CD8-positive, alpha-beta T cell (primary cell): ENCODE measurements at regions of chr16 and their contacts with region 1.

Region 1: GRCh38 chr16:48385272-48386150 is at the start of gene SIAH1:
- DNase-seq: peak; percentile 77 to 94 (median 89)
- ATAC-seq: peak; percentile 84
- H3K4me3 ChIP-seq: peak within 1 kb of the TSS; percentile 63 to 74
- H3K4me3 Mint-ChIP-seq: peak within 1 kb of the TSS; percentile 86
- H3K27ac ChIP-seq: peak within 1 kb of the TSS; percentile 54 to 68
- H3K27ac Mint-ChIP-seq: peak within 1 kb of the TSS; percentile 82
- H3K4me1 ChIP-seq: peaks cover 13% of the 10 kb centered on the region
- H3K4me1 Mint-ChIP-seq: peaks cover 25% of the 10 kb centered on the region
- H3K27me3 ChIP-seq: no peaks in the 10 kb centered on the region
- H3K27me3 Mint-ChIP-seq: no peaks in the 10 kb centered on the region
- CTCF ChIP-seq: no peak
- total RNA-seq, gene SIAH1: 28.1 to 34.8 TPM

Region 2: GRCh38 chr16:46673320-46674013 is 1712.0 kb before region 1 on chr16:
- CTCF ChIA-PET with region 1: no interaction called
- POLR2A ChIA-PET with region 1: no interaction called
- intact Hi-C with region 1: loop called in 1 of 2 experiments (anchors 10 kb)
- DNase-seq: peak in 8 of 9 experiments; percentile 17 to 76 (median 48)
- ATAC-seq: peak; percentile 95
- H3K4me3 ChIP-seq: no peak overlapping the region
- H3K4me3 Mint-ChIP-seq: no peak overlapping the region
- H3K27ac ChIP-seq: no peak overlapping the region
- H3K27ac Mint-ChIP-seq: no peak overlapping the region
- H3K4me1 ChIP-seq: no peaks in the 10 kb centered on the region
- H3K4me1 Mint-ChIP-seq: peaks cover 2% of the 10 kb centered on the region
- H3K27me3 ChIP-seq: no peaks in the 10 kb centered on the region
- H3K27me3 Mint-ChIP-seq: no peaks in the 10 kb centered on the region
- CTCF ChIP-seq: peak; percentile 95

Region 3: DNA sequence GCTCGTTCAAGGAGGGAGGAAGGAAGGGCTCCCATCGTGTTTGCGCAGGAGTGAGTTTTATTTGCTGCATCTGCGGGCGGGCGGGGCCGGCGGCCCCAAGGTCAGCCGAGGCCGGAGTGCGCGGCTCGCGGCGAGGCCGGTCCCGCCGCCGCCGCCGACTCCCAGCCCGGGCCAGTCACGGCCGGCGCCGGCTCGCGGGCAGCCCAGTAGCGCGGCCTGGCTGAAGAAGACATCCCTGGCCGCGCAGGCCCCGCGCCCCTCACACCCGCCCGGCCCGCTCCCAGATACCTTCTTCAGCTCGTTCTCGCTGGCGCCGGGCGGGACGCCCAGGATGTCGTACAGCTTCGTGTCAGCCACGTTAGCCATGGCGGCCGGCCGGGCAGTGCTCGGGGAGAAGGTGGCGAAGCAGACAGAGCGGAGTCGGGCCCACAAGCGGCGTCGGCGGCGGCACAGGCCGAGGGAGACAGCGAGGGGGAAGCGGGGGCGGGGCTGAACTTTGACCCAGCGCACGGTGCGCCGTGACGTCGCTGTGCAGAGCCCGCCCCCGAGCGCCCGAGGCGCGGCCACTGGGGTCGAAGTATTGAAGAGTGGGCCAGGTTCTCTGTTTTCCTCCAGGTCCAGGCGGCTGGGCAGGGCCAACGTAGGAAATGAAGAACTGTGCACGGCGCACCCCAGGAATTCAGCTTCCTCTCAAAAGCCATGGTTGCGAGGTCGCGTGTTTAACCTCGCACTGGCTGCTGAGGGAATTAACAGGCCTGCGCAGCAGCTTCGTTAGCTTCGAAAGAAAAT is 1412.1 kb before region 1 on chr16 and contains the start of gene DNAJA2:
- CTCF ChIA-PET with region 1: no interaction called
- POLR2A ChIA-PET with region 1: no interaction called
- intact Hi-C with region 1: loop called (anchors 5 kb)
- DNase-seq: peak; percentile 84 to 96 (median 93)
- ATAC-seq: peak; percentile 93
- H3K4me3 ChIP-seq: peak within 1 kb of the TSS; percentile 87 to 89
- H3K4me3 Mint-ChIP-seq: peak within 1 kb of the TSS; percentile 92
- H3K27ac ChIP-seq: peak within 1 kb of the TSS; percentile 96 to 98
- H3K27ac Mint-ChIP-seq: peak within 1 kb of the TSS; percentile 100
- H3K4me1 ChIP-seq: peaks cover 45% of the 10 kb centered on the region
- H3K4me1 Mint-ChIP-seq: peaks cover 53% of the 10 kb centered on the region
- H3K27me3 ChIP-seq: no peaks in the 10 kb centered on the region
- H3K27me3 Mint-ChIP-seq: no peaks in the 10 kb centered on the region
- CTCF ChIP-seq: no peak
- total RNA-seq, gene DNAJA2: 82.8 to 83.1 TPM

Region 4: DNA sequence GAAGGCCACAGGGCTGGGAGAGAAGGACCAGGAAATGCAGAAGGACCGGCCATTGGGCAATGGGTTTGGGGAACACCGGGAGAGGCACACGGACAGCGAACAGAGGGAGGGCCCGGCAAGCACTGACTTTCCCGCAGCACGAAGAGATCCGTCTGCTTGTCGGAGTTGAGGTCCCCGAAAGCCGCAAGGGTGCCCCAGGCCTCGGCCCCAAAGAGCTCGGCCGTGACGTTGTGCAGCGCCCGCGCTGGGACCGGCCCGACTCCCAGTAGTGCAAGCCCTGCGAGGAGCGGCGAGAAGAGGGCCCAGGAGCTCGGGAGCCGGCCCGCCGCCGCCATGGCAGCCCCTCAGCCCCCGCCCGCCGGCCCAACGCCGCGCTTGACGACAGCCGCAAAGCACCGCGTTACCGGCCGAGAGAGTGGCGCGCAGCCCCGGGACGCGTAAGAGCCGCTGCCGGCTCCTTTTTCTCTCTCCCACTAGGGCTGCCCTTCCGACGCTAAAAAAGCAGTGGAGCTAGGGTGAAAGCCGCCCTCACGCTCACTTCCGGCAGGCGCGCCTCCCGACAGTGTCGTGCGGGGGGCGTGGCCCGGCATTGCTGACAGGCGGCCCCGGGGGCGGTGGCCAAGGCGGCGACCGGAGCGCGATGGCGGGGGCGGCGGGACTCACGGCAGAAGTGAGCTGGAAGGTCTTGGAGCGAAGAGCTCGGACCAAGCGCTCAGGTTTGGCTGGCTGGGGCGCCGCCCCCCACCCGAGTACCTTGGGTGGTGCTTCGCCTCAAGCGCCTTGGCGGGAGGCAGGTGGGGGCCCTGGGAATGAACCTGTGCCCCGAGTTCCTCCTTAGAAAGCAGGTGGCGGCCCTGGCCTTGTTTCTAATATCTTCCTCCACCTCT is 924.6 kb before region 1 on chr16 and contains the starts of genes ITFG1 and PHKB:
- CTCF ChIA-PET with region 1: no interaction called
- POLR2A ChIA-PET with region 1: no interaction called
- intact Hi-C with region 1: loop called in 1 of 2 experiments (anchors 10 kb)
- DNase-seq: peak; percentile 91 to 97 (median 95)
- ATAC-seq: peak; percentile 95
- H3K4me3 ChIP-seq: peak within 1 kb of the TSS; percentile 77 to 87
- H3K4me3 Mint-ChIP-seq: peak within 1 kb of the TSS; percentile 99
- H3K27ac ChIP-seq: peak within 1 kb of the TSS; percentile 77 to 95
- H3K27ac Mint-ChIP-seq: peak within 1 kb of the TSS; percentile 95
- H3K4me1 ChIP-seq: peaks cover 33% of the 10 kb centered on the region
- H3K4me1 Mint-ChIP-seq: peaks cover 72% of the 10 kb centered on the region
- H3K27me3 ChIP-seq: no peaks in the 10 kb centered on the region
- H3K27me3 Mint-ChIP-seq: no peaks in the 10 kb centered on the region
- CTCF ChIP-seq: no peak
- total RNA-seq, gene ITFG1: 13.2 to 16.8 TPM
- total RNA-seq, gene PHKB: 32.4 to 32.8 TPM

Region 5: DNA sequence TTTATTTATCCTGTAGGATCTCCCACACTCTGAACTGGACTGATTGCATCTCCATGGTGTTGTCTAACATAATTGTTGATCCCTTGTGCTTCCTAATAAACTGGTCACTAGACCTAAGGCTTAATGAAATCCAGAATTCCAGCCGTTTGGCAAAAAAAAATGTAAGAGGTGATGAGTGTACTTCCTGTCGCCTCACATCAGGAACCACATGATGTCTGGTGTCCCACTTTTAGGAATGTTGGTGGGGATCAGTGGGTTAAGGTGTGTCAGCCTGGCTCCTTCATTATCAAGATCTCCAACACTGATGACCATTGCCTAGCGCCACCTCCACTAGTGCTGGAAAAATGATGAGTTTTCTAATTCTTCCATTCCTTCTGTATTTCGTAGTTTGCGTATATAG is 160.1 kb before region 1 on chr16:
- CTCF ChIA-PET with region 1: no interaction called
- POLR2A ChIA-PET with region 1: no interaction called
- intact Hi-C with region 1: no loop called
- DNase-seq: no peak
- ATAC-seq: no peak
- H3K4me3 ChIP-seq: no peak overlapping the region
- H3K4me3 Mint-ChIP-seq: no peak overlapping the region
- H3K27ac ChIP-seq: no peak overlapping the region
- H3K27ac Mint-ChIP-seq: no peak overlapping the region
- H3K4me1 ChIP-seq: no peaks in the 10 kb centered on the region
- H3K4me1 Mint-ChIP-seq: no peaks in the 10 kb centered on the region
- H3K27me3 ChIP-seq: no peaks in the 10 kb centered on the region
- H3K27me3 Mint-ChIP-seq: peaks cover 16% of the 10 kb centered on the region
- CTCF ChIP-seq: no peak

Region 6: DNA sequence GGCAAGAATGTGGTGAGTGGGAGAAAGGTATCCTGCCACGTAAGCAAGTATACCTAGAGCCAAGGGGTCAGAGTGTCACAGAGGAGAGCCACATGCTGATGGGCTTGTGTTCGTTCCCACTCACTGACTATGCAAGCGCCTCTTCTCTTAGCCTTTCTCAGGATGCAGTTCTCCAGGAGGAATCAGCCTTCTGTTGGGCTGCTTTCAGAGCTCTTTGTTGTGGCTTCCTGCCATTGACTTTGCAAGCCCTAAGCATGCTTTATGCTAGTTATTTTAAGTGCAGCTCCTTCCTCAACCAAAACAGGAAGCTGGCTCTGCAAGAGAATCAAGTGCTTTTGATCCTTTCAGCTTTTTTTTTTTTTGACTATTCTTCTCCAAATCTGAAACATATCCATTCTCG is 66.9 kb before region 1 on chr16:
- CTCF ChIA-PET with region 1: no interaction called
- POLR2A ChIA-PET with region 1: interaction called, 7 read pairs
- intact Hi-C with region 1: loop called in 1 of 2 experiments (anchors 10 kb)
- DNase-seq: peak in 8 of 9 experiments; percentile 7 to 73 (median 36)
- ATAC-seq: peak; percentile 87
- H3K4me3 ChIP-seq: no peak overlapping the region
- H3K4me3 Mint-ChIP-seq: peak overlapping the region; percentile 62
- H3K27ac ChIP-seq: peak overlapping the region in 1 of 2 experiments; percentile 51
- H3K27ac Mint-ChIP-seq: peak overlapping the region; percentile 79
- H3K4me1 ChIP-seq: peaks cover 32% of the 10 kb centered on the region
- H3K4me1 Mint-ChIP-seq: peaks cover 54% of the 10 kb centered on the region
- H3K27me3 ChIP-seq: no peaks in the 10 kb centered on the region
- H3K27me3 Mint-ChIP-seq: no peaks in the 10 kb centered on the region
- CTCF ChIP-seq: no peak

Region 7: GRCh38 chr16:48365581-48366164 is 19.8 kb before region 1 on chr16:
- CTCF ChIA-PET with region 1: no interaction called
- POLR2A ChIA-PET with region 1: interaction called, 10 read pairs
- intact Hi-C with region 1: loop called (anchors 1 kb)
- DNase-seq: peak; percentile 48 to 83 (median 69)
- ATAC-seq: peak; percentile 85
- H3K4me3 ChIP-seq: peak overlapping the region; percentile 65 to 83
- H3K4me3 Mint-ChIP-seq: peak overlapping the region; percentile 89
- H3K27ac ChIP-seq: peak overlapping the region; percentile 63 to 89
- H3K27ac Mint-ChIP-seq: peak overlapping the region; percentile 97
- H3K4me1 ChIP-seq: peaks cover 25% of the 10 kb centered on the region
- H3K4me1 Mint-ChIP-seq: peaks cover 40% of the 10 kb centered on the region
- H3K27me3 ChIP-seq: no peaks in the 10 kb centered on the region
- H3K27me3 Mint-ChIP-seq: no peaks in the 10 kb centered on the region
- CTCF ChIP-seq: no peak

Region 8: DNA sequence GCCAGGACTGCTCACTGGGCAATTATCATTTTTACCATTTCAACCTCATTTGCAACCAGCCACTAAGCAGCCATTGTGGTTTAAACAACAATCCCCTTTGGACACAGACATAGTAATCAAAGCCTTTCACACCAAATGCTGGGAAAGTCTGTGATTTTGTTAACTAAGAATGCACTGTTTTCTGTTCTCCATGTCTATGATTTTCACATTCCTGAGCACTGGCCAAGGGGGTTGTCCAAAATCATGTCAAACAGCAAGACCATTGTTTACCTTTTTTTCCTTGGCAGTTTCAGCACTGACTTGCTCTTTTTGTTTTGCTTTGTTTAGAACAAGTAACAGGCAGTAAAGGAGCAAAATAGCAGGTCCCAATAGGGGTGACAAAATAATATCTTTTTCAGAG is 106.0 kb after region 1 on chr16:
- CTCF ChIA-PET with region 1: no interaction called
- POLR2A ChIA-PET with region 1: no interaction called
- intact Hi-C with region 1: no loop called
- DNase-seq: no peak
- ATAC-seq: no peak
- H3K4me3 ChIP-seq: no peak overlapping the region
- H3K4me3 Mint-ChIP-seq: no peak overlapping the region
- H3K27ac ChIP-seq: no peak overlapping the region
- H3K27ac Mint-ChIP-seq: no peak overlapping the region
- H3K4me1 ChIP-seq: no peaks in the 10 kb centered on the region
- H3K4me1 Mint-ChIP-seq: no peaks in the 10 kb centered on the region
- H3K27me3 ChIP-seq: no peaks in the 10 kb centered on the region
- H3K27me3 Mint-ChIP-seq: peaks cover 11% of the 10 kb centered on the region
- CTCF ChIP-seq: no peak

Region 9: DNA sequence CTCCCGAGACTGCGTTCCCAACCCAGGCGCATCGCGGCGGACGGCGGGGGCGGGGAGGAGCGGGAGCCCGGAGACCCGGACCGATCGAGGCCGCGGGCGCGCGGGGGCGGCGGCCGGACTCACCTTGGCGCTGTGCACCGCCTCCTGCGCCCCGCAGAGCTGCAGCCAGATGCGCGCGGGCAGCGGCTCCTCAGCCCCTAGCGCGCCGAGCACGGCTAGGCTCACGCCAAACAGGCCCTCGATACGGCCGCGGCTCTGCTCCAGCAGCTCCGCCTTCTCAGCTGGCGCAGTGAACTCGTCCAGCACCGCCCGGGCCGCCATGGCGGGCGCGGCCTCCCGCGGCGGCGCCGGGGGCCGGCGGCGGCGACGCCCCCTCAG is 224.1 kb after region 1 on chr16:
- CTCF ChIA-PET with region 1: no interaction called
- POLR2A ChIA-PET with region 1: interaction called, 10 read pairs
- intact Hi-C with region 1: loop called (anchors 1 to 2 kb)
- DNase-seq: no peak
- ATAC-seq: peak; percentile 17
- H3K4me3 ChIP-seq: peak overlapping the region; percentile 81 to 88
- H3K4me3 Mint-ChIP-seq: peak overlapping the region; percentile 86
- H3K27ac ChIP-seq: peak overlapping the region; percentile 72 to 87
- H3K27ac Mint-ChIP-seq: peak overlapping the region; percentile 94
- H3K4me1 ChIP-seq: peaks cover 79% of the 10 kb centered on the region
- H3K4me1 Mint-ChIP-seq: peaks cover 40% of the 10 kb centered on the region
- H3K27me3 ChIP-seq: no peaks in the 10 kb centered on the region
- H3K27me3 Mint-ChIP-seq: no peaks in the 10 kb centered on the region
- CTCF ChIP-seq: no peak